Endothelial cell of umbilical vein (primary cell): ENCODE measurements at regions of chr19 and their contacts with region 1.

Region 1: GRCh38 chr19:3586124-3586626 is 897 bp downstream of the GIPC3 start:
- DNase-seq: no peak
- H3K4me3 ChIP-seq: peak overlapping the region; percentile 16 to 40 (median 25)
- H3K27ac ChIP-seq: no peak overlapping the region
- H3K4me1 ChIP-seq: peaks cover 5% of the 10 kb centered on the region
- H3K27me3 ChIP-seq: no peaks in the 10 kb centered on the region
- CTCF ChIP-seq: peak; percentile 62 to 80
- POLR2A ChIP-seq: no peak

Region 2: GRCh38 chr19:3494051-3494450 is 92.1 kb before region 1 on chr19:
- CTCF ChIA-PET with region 1: no interaction called
- POLR2A ChIA-PET with region 1: no interaction called
- dilution Hi-C with region 1: no loop called
- intact Hi-C with region 1: no loop called
- DNase-seq: no peak
- H3K4me3 ChIP-seq: no peak overlapping the region
- H3K27ac ChIP-seq: no peak overlapping the region
- H3K4me1 ChIP-seq: no peaks in the 10 kb centered on the region
- H3K27me3 ChIP-seq: no peaks in the 10 kb centered on the region
- CTCF ChIP-seq: no peak
- POLR2A ChIP-seq: no peak

Region 3: DNA sequence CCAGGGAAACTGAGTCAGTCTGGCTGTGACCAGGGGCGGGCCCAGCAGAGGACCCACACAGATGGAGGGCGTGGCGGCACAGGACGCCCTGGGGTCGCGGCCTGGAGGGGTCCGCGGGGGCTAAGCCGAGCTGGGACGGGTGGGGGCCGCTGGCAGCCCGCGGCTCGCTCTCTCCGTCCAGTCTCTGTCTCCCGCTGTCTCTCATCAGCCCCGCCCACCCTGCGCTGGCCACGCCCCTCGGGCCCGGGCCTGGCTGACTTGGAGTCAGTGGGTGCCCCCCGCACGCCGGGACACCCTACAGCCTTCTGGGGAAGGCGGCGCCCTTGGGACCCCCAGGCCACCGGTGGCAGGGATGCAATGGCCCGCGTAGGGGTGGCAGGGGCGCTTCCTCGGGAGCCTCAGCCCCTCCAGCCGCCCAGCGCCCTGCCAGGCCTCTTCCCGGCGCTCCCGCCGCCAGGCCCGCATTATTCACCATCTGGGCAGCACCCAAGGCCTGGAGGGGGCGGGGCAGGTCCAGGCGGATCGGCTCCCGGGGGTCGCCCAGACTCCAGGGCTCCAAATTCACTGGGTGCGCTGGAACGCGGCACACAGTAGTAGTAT is 20.6 kb after region 1 on chr19 and contains the start of gene TBXA2R:
- CTCF ChIA-PET with region 1: interaction called, 10 read pairs
- POLR2A ChIA-PET with region 1: no interaction called
- dilution Hi-C with region 1: no loop called
- intact Hi-C with region 1: loop called (anchors 2 kb)
- DNase-seq: peak; percentile 69
- H3K4me3 ChIP-seq: peak within 1 kb of the TSS; percentile 39 to 48 (median 39)
- H3K27ac ChIP-seq: peak within 1 kb of the TSS; percentile 34
- H3K4me1 ChIP-seq: peaks cover 23% of the 10 kb centered on the region
- H3K27me3 ChIP-seq: no peaks in the 10 kb centered on the region
- CTCF ChIP-seq: no peak
- POLR2A ChIP-seq: peak; percentile 17
- total RNA-seq, gene TBXA2R: 2.9 and 3.4 TPM in 2 replicates

Region 4: DNA sequence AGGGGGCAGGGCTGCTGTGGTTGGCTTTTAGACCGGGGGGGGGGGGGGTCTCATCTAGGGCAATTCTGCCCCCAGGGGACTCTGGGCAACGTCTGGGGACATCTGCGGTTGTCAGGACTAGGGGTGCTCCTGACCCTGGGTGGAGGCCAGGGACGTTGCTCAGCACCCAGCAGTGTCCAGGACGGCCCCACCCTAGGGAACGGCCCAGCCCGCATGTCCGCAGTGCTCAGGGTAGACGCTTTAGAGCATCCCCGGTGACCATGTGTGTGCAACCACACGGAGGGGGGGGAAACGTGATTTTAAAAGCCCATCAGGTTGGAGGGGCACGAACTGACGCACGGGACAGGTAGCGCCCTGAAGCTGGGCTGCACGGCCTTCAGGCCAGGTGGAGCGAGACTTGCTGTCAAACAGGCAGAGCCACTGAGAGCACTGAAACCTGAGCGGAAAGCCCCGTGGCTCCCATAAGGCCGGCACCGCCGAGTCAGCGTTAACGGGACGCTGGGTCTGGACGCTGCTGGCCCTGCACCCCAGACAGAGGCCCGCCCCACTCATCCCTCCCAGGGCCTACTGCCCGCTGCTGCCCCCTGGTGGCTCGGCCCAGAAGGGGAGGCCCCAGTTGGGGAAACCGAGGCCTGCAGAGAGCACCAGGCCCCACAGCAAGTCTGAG is 32.1 kb after region 1 on chr19:
- CTCF ChIA-PET with region 1: interaction called, 9 read pairs
- POLR2A ChIA-PET with region 1: no interaction called
- dilution Hi-C with region 1: no loop called
- intact Hi-C with region 1: loop called (anchors 1 kb)
- DNase-seq: peak; percentile 38
- H3K4me3 ChIP-seq: no peak overlapping the region
- H3K27ac ChIP-seq: no peak overlapping the region
- H3K4me1 ChIP-seq: no peaks in the 10 kb centered on the region
- H3K27me3 ChIP-seq: no peaks in the 10 kb centered on the region
- CTCF ChIP-seq: peak; percentile 85 to 97
- POLR2A ChIP-seq: no peak